ENCODE measurements at regions of chrX and their contacts with region 1.

Region 1: DNA sequence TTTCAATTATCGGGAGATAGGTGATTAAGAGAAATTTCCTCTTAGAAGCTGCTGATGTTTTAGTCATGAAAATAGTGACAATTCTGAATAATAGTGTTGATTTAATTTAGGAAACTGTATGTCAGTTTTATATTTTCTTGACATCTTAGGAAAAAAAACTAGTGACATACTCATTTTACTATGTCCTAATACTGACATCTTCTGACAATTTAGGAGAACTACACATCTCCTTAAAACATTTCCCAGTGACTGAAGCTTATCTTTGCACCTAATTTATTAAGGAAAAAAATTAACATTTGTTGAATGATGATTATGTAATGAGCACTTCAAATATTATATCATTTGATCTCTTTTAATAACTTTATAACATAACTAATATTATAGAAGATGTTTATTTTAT is 42.0 kb upstream of the RBMXL3 start:
- DNase-seq: peak; percentile 2
- ATAC-seq: no peak
- H3K4me3 ChIP-seq: no peak overlapping the region
- H3K27ac ChIP-seq: no peak overlapping the region
- H3K4me1 ChIP-seq: no peaks in the 10 kb centered on the region
- H3K27me3 ChIP-seq: no peaks in the 10 kb centered on the region
- CTCF ChIP-seq: peak; percentile 15 to 43 (median 16); a peak in 4 of 6 replicates
- POLR2A ChIP-seq: no peak
- RAD21 ChIP-seq: peak; percentile 40; the same call in 1 of the 2 replicates

Region 2: DNA sequence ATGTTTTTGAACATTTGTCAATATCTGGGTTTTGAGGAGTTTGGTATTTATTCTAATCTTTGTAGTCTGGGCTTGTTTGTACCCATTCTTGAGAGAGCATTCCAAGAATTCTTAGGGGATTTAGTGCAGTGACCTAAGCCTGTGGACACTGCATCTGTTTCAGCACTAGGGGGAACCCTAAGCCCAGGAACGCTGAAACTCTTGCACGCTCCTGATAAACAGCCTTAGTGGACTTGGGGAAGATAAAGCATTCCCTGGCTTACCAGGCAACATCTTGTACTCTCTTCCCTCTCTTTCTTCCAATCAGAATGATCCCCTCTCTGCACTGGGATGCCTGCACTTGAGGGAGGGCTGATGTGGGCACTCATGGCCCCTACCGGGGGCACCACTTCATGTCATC is 1218.2 kb before region 1 on chrX:
- CTCF ChIA-PET with region 1: no interaction called
- POLR2A ChIA-PET with region 1: no interaction called
- RAD21 ChIA-PET with region 1: no interaction called
- intact Hi-C with region 1: loop called (anchors 5 kb)
- DNase-seq: peak; percentile 43
- ATAC-seq: peak; percentile 91
- H3K4me3 ChIP-seq: no peak overlapping the region
- H3K27ac ChIP-seq: no peak overlapping the region
- H3K4me1 ChIP-seq: no peaks in the 10 kb centered on the region
- H3K27me3 ChIP-seq: no peaks in the 10 kb centered on the region
- CTCF ChIP-seq: peak; percentile 36 to 69 (median 66); a peak in 5 of 6 replicates
- POLR2A ChIP-seq: no peak
- RAD21 ChIP-seq: peak; percentile 78

Region 3: GRCh38 chrX:114619874-114620273 is 527.3 kb before region 1 on chrX:
- CTCF ChIA-PET with region 1: interaction called, 4 read pairs
- POLR2A ChIA-PET with region 1: no interaction called
- RAD21 ChIA-PET with region 1: no interaction called
- intact Hi-C with region 1: loop called (anchors 10 kb)
- DNase-seq: no peak
- ATAC-seq: no peak; the same call in 1 of the 2 replicates
- H3K4me3 ChIP-seq: no peak overlapping the region
- H3K27ac ChIP-seq: no peak overlapping the region
- H3K4me1 ChIP-seq: no peaks in the 10 kb centered on the region
- H3K27me3 ChIP-seq: no peaks in the 10 kb centered on the region
- CTCF ChIP-seq: peak in 2 of 3 experiments; percentile 37 to 40; a peak in 3 of 6 replicates
- POLR2A ChIP-seq: no peak
- RAD21 ChIP-seq: no peak

Region 4: GRCh38 chrX:114626323-114626722 is 520.9 kb before region 1 on chrX:
- CTCF ChIA-PET with region 1: interaction called, 10 read pairs
- POLR2A ChIA-PET with region 1: no interaction called
- RAD21 ChIA-PET with region 1: no interaction called
- intact Hi-C with region 1: loop called (anchors 10 kb)
- DNase-seq: no peak
- ATAC-seq: no peak
- H3K4me3 ChIP-seq: no peak overlapping the region
- H3K27ac ChIP-seq: no peak overlapping the region
- H3K4me1 ChIP-seq: no peaks in the 10 kb centered on the region
- H3K27me3 ChIP-seq: no peaks in the 10 kb centered on the region
- CTCF ChIP-seq: peak; percentile 32 to 42 (median 36); a peak in 4 of 6 replicates
- POLR2A ChIP-seq: no peak
- RAD21 ChIP-seq: peak; percentile 38

Region 5: GRCh38 chrX:114959729-114960128 is 187.5 kb before region 1 on chrX:
- CTCF ChIA-PET with region 1: interaction called, 10 read pairs
- POLR2A ChIA-PET with region 1: no interaction called
- RAD21 ChIA-PET with region 1: no interaction called
- intact Hi-C with region 1: no loop called
- DNase-seq: no peak
- ATAC-seq: no peak
- H3K4me3 ChIP-seq: no peak overlapping the region
- H3K27ac ChIP-seq: no peak overlapping the region
- H3K4me1 ChIP-seq: no peaks in the 10 kb centered on the region
- H3K27me3 ChIP-seq: no peaks in the 10 kb centered on the region
- CTCF ChIP-seq: peak; percentile 18 to 54 (median 22); a peak in 4 of 6 replicates
- POLR2A ChIP-seq: no peak
- RAD21 ChIP-seq: peak; percentile 54

Measured in HCT116 (cell line).